PC-9 (cell line): ENCODE measurements at regions of chr1 and their contacts with region 1.

Region 1: GRCh38 chr1:21334214-21335087 is 44.2 kb upstream of the ECE1 start:
- DNase-seq: peak; percentile 86 to 92
- H3K4me3 ChIP-seq: peak overlapping the region; percentile 42; the same call in 1 of the 2 replicates
- H3K27ac ChIP-seq: peak overlapping the region; percentile 94
- H3K4me1 ChIP-seq: peaks cover 89% of the 10 kb centered on the region
- H3K27me3 ChIP-seq: no peaks in the 10 kb centered on the region
- CTCF ChIP-seq: peak; percentile 67

Region 2: DNA sequence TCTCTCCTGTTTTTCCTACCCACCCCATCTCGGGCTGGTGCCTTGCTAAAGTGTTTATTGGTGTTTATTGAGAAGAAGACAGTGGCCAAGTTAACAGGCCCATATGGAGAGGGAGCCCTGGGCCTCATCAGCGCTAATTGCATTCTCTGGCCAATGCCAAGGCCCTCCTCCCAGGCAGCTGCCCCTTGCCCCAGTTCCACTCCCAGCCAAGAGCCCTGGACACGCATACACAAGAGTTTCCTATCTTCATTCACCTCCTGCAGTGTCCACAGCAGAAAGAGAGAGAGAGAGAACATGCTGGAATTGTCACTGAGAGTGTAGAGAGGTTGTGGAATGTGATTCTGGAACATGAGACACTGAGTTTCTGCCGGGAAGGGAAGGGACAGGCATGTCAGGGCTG is 1069.2 kb before region 1 on chr1:
- CTCF ChIA-PET with region 1: no interaction called
- POLR2A ChIA-PET with region 1: no interaction called
- intact Hi-C with region 1: no loop called
- DNase-seq: no peak
- H3K4me3 ChIP-seq: no peak overlapping the region
- H3K27ac ChIP-seq: no peak overlapping the region
- H3K4me1 ChIP-seq: peaks cover 22% of the 10 kb centered on the region
- H3K27me3 ChIP-seq: no peaks in the 10 kb centered on the region
- CTCF ChIP-seq: no peak

Region 3: GRCh38 chr1:21255278-21255942 is 79.0 kb before region 1 on chr1:
- CTCF ChIA-PET with region 1: no interaction called
- POLR2A ChIA-PET with region 1: no interaction called
- intact Hi-C with region 1: loop called (anchors 1 kb)
- DNase-seq: peak; percentile 42 to 75
- H3K4me3 ChIP-seq: no peak overlapping the region
- H3K27ac ChIP-seq: no peak overlapping the region
- H3K4me1 ChIP-seq: peaks cover 20% of the 10 kb centered on the region
- H3K27me3 ChIP-seq: no peaks in the 10 kb centered on the region
- CTCF ChIP-seq: peak; percentile 77

Region 4: DNA sequence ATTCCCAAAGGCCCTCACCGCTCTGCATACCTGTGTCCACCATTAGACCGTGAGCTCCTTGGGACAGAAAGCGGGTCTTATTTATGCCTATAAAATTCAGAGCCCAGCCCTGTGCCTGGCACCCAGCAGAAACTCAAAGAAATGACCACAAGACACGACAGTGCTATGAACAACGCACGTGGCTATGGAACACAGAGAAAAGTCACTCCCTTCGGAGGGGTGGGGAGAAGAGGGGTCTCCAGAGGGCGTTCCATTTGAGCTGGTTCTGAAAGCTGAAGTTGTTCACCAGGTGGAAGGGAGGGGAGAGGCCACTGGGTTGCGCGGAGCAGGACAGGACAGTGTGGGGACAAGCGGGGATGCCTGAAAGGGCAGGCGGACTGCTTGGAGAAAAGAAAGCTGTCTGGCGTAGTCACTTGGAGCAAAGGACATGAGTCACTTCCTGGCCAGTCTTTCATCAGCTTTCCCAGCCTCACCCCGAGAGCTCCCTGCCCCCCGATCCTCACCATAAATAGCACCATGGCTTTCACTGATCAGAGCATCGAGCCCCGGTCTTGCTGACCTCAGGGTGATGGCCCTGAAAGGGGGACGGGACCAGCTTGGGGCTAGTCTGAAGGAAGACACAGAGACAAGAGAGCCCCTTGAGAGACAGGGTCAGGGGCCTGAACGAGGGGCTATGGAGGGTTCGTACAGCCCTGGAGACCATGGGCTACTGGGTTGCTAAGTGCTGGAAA is 72.7 kb before region 1 on chr1:
- CTCF ChIA-PET with region 1: no interaction called
- POLR2A ChIA-PET with region 1: interaction called, 4 read pairs
- intact Hi-C with region 1: loop called (anchors 2 kb)
- DNase-seq: peak; percentile 77 to 82
- H3K4me3 ChIP-seq: no peak overlapping the region
- H3K27ac ChIP-seq: peak overlapping the region; percentile 96
- H3K4me1 ChIP-seq: peaks cover 26% of the 10 kb centered on the region
- H3K27me3 ChIP-seq: no peaks in the 10 kb centered on the region
- CTCF ChIP-seq: no peak

Region 5: DNA sequence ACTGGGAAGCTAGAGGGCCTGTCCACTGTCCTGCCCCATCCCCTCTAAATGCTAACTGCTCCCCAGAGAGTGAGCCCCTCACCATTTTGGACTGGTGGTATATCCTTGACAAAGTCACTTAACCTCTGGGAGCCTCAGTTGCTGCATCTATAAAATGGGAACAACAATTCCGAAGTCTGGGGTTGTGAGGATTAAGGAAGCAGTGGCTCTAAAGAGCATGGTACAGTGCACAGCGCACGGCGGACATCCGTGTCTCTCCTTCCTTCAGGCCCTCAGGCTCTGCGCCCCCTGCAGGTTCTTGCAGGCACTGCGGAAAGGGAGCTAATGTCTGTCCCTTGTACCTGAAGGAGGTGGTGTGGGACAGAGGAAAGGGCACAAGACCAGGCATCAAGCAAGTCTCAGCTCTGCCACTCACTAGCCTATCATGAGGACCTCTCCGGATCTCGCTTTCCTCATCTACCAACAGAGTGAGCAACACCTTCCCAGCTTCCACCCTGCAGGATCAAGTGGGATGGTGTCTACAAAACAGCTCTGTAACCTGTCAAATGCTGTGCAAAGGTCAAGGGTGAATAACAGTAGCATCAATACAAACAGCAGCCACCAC is 64.3 kb before region 1 on chr1:
- CTCF ChIA-PET with region 1: interaction called, 4 read pairs
- POLR2A ChIA-PET with region 1: no interaction called
- intact Hi-C with region 1: loop called (anchors 1 kb)
- DNase-seq: peak in 1 of 2 experiments; percentile 46
- H3K4me3 ChIP-seq: no peak overlapping the region
- H3K27ac ChIP-seq: no peak overlapping the region
- H3K4me1 ChIP-seq: no peaks in the 10 kb centered on the region
- H3K27me3 ChIP-seq: no peaks in the 10 kb centered on the region
- CTCF ChIP-seq: peak; percentile 85

Region 6: GRCh38 chr1:21294266-21294989 is 40.0 kb before region 1 on chr1:
- CTCF ChIA-PET with region 1: interaction called, 3 read pairs
- POLR2A ChIA-PET with region 1: interaction called, 3 read pairs
- intact Hi-C with region 1: loop called (anchors 1 kb)
- DNase-seq: peak; percentile 71 to 85
- H3K4me3 ChIP-seq: peak overlapping the region; percentile 2; the same call in 1 of the 2 replicates
- H3K27ac ChIP-seq: peak overlapping the region; percentile 94
- H3K4me1 ChIP-seq: peaks cover 42% of the 10 kb centered on the region
- H3K27me3 ChIP-seq: no peaks in the 10 kb centered on the region
- CTCF ChIP-seq: no peak

Region 7: GRCh38 chr1:21302747-21303715 is 31.4 kb before region 1 on chr1:
- CTCF ChIA-PET with region 1: interaction called, 3 read pairs
- POLR2A ChIA-PET with region 1: interaction called, 10 read pairs
- intact Hi-C with region 1: no loop called
- DNase-seq: peak in 1 of 2 experiments; percentile 33
- H3K4me3 ChIP-seq: no peak overlapping the region
- H3K27ac ChIP-seq: no peak overlapping the region
- H3K4me1 ChIP-seq: peaks cover 23% of the 10 kb centered on the region
- H3K27me3 ChIP-seq: no peaks in the 10 kb centered on the region
- CTCF ChIP-seq: no peak

Region 8: GRCh38 chr1:22507587-22507986 is 1173.1 kb after region 1 on chr1:
- CTCF ChIA-PET with region 1: interaction called, 21 read pairs
- POLR2A ChIA-PET with region 1: no interaction called
- intact Hi-C with region 1: no loop called
- DNase-seq: no peak
- H3K4me3 ChIP-seq: no peak overlapping the region
- H3K27ac ChIP-seq: no peak overlapping the region
- H3K4me1 ChIP-seq: no peaks in the 10 kb centered on the region
- H3K27me3 ChIP-seq: no peaks in the 10 kb centered on the region
- CTCF ChIP-seq: no peak